Common myeloid progenitor, CD34-positive (primary cell): ENCODE measurements at regions of chr19 and their contacts with region 1.

Region 1: DNA sequence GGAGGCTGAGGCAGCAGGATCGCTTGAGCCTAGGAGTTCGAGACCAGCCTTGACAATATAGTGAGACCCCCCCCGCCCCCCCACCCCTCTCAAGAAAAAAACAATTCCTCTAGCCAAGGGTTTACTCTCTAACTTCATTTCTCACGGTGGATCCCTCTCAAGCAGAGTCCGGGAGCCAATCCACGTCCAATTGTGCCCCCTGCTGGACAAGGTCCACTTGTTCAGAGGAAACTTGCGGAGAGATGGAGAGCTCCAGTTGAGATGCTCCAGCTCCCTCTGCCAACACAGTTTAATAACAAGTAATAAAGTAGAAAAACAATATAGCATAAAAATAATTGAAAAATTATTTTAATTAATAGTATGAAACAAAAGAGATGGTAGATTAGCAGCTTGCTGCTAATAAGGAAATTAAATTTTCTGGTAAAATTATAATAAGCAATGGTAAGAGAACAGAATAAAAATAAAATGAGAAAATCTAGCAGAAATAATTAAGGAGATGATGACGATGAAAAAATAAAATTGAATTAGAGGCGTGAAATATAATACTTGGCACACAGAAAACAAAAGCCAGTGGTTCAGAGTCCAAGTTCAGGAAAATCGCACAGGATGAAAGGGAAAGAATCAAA is 14.5 kb upstream of the SIGLEC14 start:
- DNase-seq: peak; percentile 78 to 88 (median 85)
- H3K4me3 ChIP-seq: no peak overlapping the region
- H3K27ac ChIP-seq: no peak overlapping the region
- H3K4me1 ChIP-seq: peaks cover 0 to 12% (median 1%) of the 10 kb centered on the region in 4 experiments
- H3K27me3 ChIP-seq: peaks cover 0 to 17% (median 3%) of the 10 kb centered on the region in 5 experiments

Region 2: DNA sequence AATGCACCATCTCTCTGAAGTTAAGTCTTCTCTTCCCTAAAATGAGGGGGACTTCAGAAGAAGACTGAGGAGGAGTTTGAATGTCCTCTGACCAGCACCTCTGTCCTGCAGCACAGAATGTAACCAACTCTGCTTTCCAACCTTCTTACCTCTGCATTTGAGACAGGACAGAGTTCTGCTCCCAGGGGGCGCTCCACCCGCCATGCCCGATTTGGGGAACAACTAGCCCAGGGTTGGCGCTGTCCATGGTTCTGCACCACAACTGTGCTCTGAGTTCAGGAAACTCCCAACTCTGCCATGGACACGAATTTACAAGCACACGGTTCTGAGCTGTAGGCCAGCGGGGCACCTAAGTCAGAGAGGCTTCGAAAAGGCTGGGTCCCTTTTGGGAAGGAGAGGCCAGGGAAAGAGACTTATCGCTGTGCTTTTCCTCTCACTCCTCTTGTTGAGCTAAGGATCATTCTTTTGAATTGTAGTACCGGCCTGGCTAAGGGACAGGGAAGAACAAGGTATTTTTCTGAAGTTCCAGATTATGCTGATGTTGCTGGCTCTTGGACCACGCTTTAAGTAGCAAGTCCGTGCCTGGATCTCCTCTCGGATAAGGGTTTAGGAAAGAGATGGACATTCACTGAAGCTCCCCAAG is 53.0 kb before region 1 on chr19:
- CTCF ChIA-PET with region 1: interaction called, 65 read pairs
- POLR2A ChIA-PET with region 1: no interaction called
- DNase-seq: peak; percentile 87 to 93 (median 88)
- H3K4me3 ChIP-seq: no peak overlapping the region
- H3K27ac ChIP-seq: no peak overlapping the region
- H3K4me1 ChIP-seq: peaks cover 0 to 4% (median 0%) of the 10 kb centered on the region in 4 experiments
- H3K27me3 ChIP-seq: peaks cover 0 to 10% (median 0%) of the 10 kb centered on the region in 5 experiments

Region 3: GRCh38 chr19:51690454-51691073 is 29.5 kb after region 1 on chr19:
- CTCF ChIA-PET with region 1: no interaction called
- POLR2A ChIA-PET with region 1: no interaction called
- DNase-seq: peak; percentile 56 to 75 (median 75)
- H3K4me3 ChIP-seq: peak overlapping the region; percentile 58 to 88 (median 72)
- H3K27ac ChIP-seq: peak overlapping the region; percentile 85 to 93
- H3K4me1 ChIP-seq: peaks cover 0 to 40% (median 35%) of the 10 kb centered on the region in 4 experiments
- H3K27me3 ChIP-seq: no peaks in the 10 kb centered on the region

Region 4: GRCh38 chr19:51742789-51743188 is 81.7 kb after region 1 on chr19:
- CTCF ChIA-PET with region 1: no interaction called
- POLR2A ChIA-PET with region 1: no interaction called
- DNase-seq: no peak
- H3K4me3 ChIP-seq: no peak overlapping the region
- H3K27ac ChIP-seq: no peak overlapping the region
- H3K4me1 ChIP-seq: peaks cover 0 to 5% (median 0%) of the 10 kb centered on the region in 4 experiments
- H3K27me3 ChIP-seq: peaks cover 0 to 18% (median 2%) of the 10 kb centered on the region in 5 experiments

Region 5: DNA sequence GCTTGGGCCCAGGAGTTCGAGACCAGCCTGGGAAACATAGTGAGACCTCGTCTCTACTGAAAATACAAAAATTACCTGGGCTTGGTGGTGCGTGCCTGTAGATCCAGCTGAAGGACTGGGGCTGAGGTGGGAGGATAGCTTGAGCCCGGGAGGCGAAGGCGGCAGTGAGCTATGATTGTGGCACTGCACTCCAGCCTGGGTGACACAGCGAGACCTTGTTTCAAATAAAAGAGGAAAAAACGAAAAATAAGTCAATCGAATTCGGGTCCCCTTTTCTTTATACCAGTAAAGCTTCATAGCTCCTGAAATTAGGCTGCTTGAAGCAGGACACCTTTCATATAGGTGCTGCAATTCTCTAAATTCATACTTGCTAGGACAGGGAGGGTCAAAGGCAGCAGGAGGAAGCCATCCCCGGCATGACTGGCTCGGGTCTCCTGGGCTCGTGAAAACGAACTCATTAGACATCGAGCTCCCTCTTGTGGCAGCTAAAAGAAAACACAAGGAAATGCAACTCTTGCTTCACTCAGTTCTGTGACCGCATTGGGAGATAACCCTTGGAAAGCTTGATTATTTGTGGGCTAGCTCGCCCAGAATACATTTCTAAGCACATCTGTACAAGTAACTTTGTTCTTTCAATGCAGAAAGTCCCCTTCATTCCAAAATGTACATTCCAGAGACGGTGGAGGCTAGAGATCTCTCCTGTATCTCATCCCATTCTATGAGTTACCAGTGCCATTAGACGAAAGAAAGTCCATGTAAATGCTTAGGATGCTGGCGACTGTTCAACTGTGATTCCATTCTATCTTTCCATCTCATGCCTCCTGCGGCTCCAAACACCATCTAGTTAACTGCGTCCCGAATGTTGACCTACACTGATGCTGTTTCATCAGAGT is 116.7 kb after region 1 on chr19:
- CTCF ChIA-PET with region 1: interaction called, 11 read pairs
- POLR2A ChIA-PET with region 1: no interaction called
- DNase-seq: peak; percentile 87 to 92 (median 88)
- H3K4me3 ChIP-seq: peak overlapping the region in 1 of 7 experiments; percentile 19
- H3K27ac ChIP-seq: no peak overlapping the region
- H3K4me1 ChIP-seq: peaks cover 0 to 4% (median 0%) of the 10 kb centered on the region in 4 experiments
- H3K27me3 ChIP-seq: peaks cover 0 to 23% (median 5%) of the 10 kb centered on the region in 5 experiments

Region 6: DNA sequence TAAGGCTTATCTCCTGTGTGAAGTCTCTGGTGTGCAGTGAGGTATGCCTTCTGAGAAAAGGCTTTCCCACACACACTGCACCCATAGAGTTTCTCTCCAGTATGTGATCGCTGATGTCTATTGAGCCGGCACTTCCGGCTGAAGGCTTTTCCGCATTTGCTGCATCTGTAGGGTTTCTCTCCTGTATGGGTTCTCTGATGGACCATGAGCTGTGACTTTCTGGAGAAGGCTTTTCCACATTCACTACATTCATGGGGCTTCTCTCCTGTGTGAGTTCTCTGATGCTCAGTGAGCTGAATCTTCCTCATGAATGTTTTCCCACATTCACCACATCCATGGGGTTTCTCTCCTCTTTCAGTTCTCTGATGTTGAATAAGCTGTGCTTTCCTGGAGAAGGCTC is 212.0 kb after region 1 on chr19:
- CTCF ChIA-PET with region 1: no interaction called
- POLR2A ChIA-PET with region 1: no interaction called
- DNase-seq: no peak
- H3K4me3 ChIP-seq: peak overlapping the region in 2 of 7 experiments; percentile 1 to 44
- H3K27ac ChIP-seq: no peak overlapping the region
- H3K4me1 ChIP-seq: no peaks in the 10 kb centered on the region
- H3K27me3 ChIP-seq: no peaks in the 10 kb centered on the region